A549 (cell line): ENCODE measurements at regions of chr1 and their contacts with region 1.

Region 1: DNA sequence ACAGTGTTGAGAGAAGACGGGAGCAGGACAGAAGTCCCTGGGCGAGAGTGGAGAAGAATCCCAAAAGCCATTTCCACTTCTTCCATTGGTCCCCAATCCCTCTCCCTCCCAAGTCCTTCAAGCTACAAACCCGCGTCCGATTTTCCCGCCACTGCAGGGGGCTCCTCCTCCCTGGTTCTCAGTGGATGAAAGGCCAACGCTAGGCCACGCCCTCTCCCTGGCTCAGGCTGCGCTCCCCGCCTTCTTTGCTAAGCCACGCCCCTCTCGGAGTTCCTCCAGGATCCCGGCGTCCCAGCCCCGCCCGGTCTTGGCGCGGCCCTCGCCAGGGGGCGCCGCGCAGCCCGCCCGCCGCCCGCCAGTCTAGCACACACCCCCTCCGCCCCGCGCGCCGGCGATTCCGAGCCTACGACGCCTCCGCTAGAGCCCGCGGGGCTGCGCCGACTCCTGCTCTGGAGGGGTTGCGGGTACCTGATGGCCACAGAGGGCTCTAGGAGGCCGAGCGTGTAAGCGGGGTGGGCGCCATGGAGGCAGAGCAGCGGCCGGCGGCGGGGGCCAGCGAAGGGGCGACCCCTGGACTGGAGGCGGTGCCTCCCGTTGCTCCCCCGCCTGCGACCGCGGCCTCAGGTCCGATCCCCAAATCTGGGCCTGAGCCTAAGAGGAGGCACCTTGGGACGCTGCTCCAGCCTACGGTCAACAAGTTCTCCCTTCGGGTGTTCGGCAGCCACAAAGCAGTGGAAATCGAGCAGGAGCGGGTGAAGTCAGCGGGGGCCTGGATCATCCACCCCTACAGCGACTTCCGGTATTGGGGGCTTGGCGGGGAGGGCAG is at the start of gene HCN3:
- DNase-seq: peak; percentile 95 to 97
- ATAC-seq: peak; percentile 68 to 82
- H3K4me3 ChIP-seq: peak within 1 kb of the TSS; percentile 93
- H3K27ac ChIP-seq: peak within 1 kb of the TSS; percentile 76 to 87
- H3K4me1 ChIP-seq: peaks cover 14% of the 10 kb centered on the region; the same call in 2 of the 3 replicates
- CTCF ChIP-seq: peak; percentile 87
- EP300 ChIP-seq: no peak
- POLR2A ChIP-seq: no peak; the same call in 1 of the 2 replicates
- RAD21 ChIP-seq: peak; percentile 33 to 69; a peak in 4 of 5 replicates
- polyA plus RNA-seq, gene HCN3: 4.1 and 7.3 TPM in 2 replicates

Region 2: DNA sequence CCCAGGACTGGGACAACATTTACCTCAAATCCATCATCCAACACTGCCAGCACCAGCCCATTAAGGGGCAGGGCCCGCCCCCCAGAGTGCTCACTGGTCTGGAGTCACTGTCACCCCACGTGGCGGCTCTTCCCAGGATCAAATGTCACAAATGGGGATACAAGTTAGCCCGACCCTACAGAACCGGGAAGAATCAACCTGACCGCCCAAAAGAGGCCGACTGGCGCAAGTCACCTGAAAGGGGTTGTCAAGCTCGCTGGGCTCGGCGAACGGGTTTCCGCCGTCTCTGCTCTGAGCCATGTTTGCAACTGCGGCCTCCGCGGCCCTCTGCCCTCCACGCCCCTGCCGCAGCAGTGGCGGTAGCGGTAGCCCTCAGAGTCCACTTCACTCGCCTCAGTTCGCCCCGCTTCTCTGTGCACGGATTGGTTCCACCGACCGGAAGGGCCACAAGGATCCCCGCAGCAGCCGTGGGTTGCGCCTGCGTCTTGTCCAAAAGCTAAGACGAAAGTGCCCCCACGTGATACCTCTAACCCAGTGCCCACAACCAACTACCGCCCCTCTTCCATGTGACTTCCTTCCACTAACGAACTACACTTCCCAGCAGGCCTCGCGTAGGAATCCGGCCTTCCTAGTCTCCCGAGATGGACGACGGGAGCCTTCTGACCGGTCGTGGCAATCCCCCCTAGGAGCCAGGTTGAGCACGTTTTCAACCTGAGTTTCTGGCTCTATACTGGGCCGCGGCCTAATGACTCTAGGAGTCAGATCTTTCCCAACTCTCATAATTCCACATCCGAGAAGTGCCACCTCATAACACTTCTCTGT is 15.2 kb before region 1 on chr1 and contains the start of gene SCAMP3:
- CTCF ChIA-PET with region 1: interaction called, 16 read pairs
- POLR2A ChIA-PET with region 1: interaction called, 25 read pairs
- DNase-seq: peak; percentile 99 to 100
- ATAC-seq: peak; percentile 96 to 98
- H3K4me3 ChIP-seq: peak within 1 kb of the TSS; percentile 86
- H3K27ac ChIP-seq: peak within 1 kb of the TSS; percentile 88 to 97
- H3K4me1 ChIP-seq: peaks cover 14% of the 10 kb centered on the region
- CTCF ChIP-seq: no peak
- EP300 ChIP-seq: no peak
- POLR2A ChIP-seq: peak; percentile 84
- RAD21 ChIP-seq: no peak
- polyA plus RNA-seq, gene SCAMP3: 135 and 147 TPM in 2 replicates

Region 3: DNA sequence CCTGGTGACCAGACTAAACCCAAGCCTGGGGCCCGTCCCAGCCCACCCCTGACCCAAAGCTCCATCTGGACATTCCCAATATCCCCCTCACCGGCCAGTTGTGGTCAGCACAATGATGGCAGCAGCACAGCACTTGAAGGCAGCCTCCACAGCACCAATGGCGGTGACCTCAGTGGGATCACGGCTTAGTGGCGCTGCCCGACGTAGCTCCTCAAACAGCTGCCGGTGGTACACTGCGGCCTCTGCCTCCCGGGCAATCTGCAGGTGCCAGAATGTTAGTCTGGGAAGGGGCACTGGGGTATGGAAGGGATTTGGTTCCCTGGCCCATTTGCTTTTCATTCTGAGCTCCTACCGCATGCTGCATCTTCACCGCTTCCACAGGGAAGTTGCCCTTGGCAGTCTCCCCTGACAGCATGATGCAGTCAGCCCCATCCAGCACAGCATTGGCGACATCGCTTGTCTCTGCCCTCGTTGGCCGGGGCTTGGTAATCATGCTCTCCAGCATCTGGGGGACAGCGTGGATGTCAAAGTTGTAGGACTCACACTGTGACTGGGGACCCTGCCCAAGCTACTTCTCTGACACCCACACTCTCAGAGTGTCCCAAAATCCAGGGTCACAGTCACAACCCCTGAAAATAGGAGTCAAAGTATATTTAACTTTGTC is 15.9 kb after region 1 on chr1:
- CTCF ChIA-PET with region 1: interaction called, 17 read pairs
- POLR2A ChIA-PET with region 1: no interaction called
- DNase-seq: no peak
- ATAC-seq: peak in 1 of 2 experiments; percentile 7; a peak in 1 of 6 replicates
- H3K4me3 ChIP-seq: no peak overlapping the region
- H3K27ac ChIP-seq: no peak overlapping the region
- H3K4me1 ChIP-seq: no peaks in the 10 kb centered on the region
- CTCF ChIP-seq: no peak
- EP300 ChIP-seq: no peak
- POLR2A ChIP-seq: no peak
- RAD21 ChIP-seq: no peak

Region 4: GRCh38 chr1:155300553-155301329 is 23.5 kb after region 1 on chr1:
- CTCF ChIA-PET with region 1: interaction called, 18 read pairs
- POLR2A ChIA-PET with region 1: no interaction called
- DNase-seq: no peak
- ATAC-seq: no peak; a peak in 2 of 6 replicates
- H3K4me3 ChIP-seq: no peak overlapping the region
- H3K27ac ChIP-seq: no peak overlapping the region
- H3K4me1 ChIP-seq: peaks cover 9% of the 10 kb centered on the region; the same call in 2 of the 3 replicates
- CTCF ChIP-seq: no peak
- EP300 ChIP-seq: no peak
- POLR2A ChIP-seq: no peak
- RAD21 ChIP-seq: no peak

Region 5: GRCh38 chr1:155308493-155309422 is 31.5 kb after region 1 on chr1 and contains the start of gene FDPS:
- CTCF ChIA-PET with region 1: interaction called, 18 read pairs
- POLR2A ChIA-PET with region 1: interaction called, 7 read pairs
- DNase-seq: peak; percentile 98 to 99
- ATAC-seq: peak; percentile 98
- H3K4me3 ChIP-seq: peak within 1 kb of the TSS; percentile 97
- H3K27ac ChIP-seq: peak within 1 kb of the TSS; percentile 93 to 95
- H3K4me1 ChIP-seq: peaks cover 27% of the 10 kb centered on the region
- CTCF ChIP-seq: no peak
- EP300 ChIP-seq: no peak
- POLR2A ChIP-seq: peak; percentile 74
- RAD21 ChIP-seq: no peak
- polyA plus RNA-seq, gene FDPS: 143 and 148 TPM in 2 replicates

Region 6: DNA sequence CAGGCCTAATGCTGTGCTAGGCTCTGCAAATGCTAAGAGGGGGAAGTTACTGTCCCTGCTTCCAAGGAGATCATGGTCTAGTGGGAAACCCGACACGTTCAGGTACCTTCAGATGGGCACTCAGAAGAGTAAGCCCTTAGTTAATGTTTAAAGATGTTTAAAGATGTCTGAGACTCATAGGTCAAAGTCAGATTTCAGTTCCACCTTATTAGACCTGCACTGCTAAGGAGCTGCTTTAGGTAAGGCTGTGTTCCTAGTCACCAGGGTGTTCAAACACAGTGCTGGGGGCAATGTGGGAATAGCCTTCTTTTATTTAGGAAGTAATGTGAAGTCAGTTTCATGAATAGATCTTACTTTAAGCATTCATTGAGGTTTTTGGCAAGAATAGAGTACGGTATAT is 39.6 kb after region 1 on chr1:
- CTCF ChIA-PET with region 1: interaction called, 44 read pairs
- POLR2A ChIA-PET with region 1: interaction called, 4 read pairs
- DNase-seq: no peak
- ATAC-seq: no peak
- H3K4me3 ChIP-seq: no peak overlapping the region
- H3K27ac ChIP-seq: no peak overlapping the region
- H3K4me1 ChIP-seq: peaks cover 4% of the 10 kb centered on the region
- CTCF ChIP-seq: no peak
- EP300 ChIP-seq: no peak
- POLR2A ChIP-seq: no peak
- RAD21 ChIP-seq: no peak